AG04450 (cell line): ENCODE measurements at regions of chr2 and their contacts with region 1.

Region 1: GRCh38 chr2:38771632-38772031 is 6.4 kb upstream of the GEMIN6 start:
- DNase-seq: no peak
- H3K4me3 ChIP-seq: no peak overlapping the region
- H3K27ac ChIP-seq: no peak overlapping the region
- H3K27me3 ChIP-seq: no peaks in the 10 kb centered on the region
- CTCF ChIP-seq: no peak

Region 2: DNA sequence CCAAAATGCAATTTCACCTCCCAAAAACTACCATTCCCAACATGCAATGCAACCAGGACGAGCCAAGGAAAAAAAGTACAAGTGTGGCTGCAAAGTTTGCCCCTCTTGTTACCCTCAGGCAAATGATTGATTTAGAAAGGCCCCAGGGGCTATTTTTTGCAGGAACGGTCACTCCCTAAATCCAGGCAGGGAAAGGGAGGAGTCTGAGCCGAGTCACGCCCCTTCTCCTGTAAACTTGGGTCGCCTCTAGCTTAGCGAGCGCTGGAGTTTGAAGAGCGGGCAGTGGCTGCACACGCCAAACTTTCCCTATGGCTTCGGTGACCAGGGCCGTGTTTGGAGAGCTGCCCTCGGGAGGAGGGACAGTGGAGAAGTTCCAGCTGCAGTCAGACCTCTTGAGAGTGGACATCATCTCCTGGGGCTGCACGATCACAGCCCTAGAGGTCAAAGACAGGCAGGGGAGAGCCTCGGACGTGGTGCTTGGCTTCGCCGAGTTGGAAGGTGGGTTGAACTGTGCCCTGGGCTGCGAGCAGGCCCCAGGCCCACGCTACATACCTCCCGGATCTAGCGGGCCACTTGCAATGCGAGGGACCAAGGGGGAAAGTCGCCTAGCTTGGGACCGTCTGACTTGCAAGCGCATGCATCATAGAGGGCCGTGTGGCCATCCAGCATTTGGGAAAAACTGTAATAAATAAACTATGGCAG is 105.6 kb before region 1 on chr2 and contains the start of gene GALM:
- CTCF ChIA-PET with region 1: no interaction called
- POLR2A ChIA-PET with region 1: no interaction called
- DNase-seq: peak; percentile 84
- H3K4me3 ChIP-seq: peak within 1 kb of the TSS; percentile 82
- H3K27ac ChIP-seq: peak within 1 kb of the TSS; percentile 50
- H3K27me3 ChIP-seq: no peaks in the 10 kb centered on the region
- CTCF ChIP-seq: no peak
- polyA plus RNA-seq, gene GALM: 15.5 and 19.0 TPM in 2 replicates

Region 3: GRCh38 chr2:38789691-38790090 is 18.1 kb after region 1 on chr2:
- CTCF ChIA-PET with region 1: no interaction called
- POLR2A ChIA-PET with region 1: interaction called, 10 read pairs
- DNase-seq: no peak
- H3K4me3 ChIP-seq: no peak overlapping the region
- H3K27ac ChIP-seq: no peak overlapping the region
- H3K27me3 ChIP-seq: no peaks in the 10 kb centered on the region
- CTCF ChIP-seq: no peak